ENCODE measurements at regions of chr1 and their contacts with region 1.

Region 1: DNA sequence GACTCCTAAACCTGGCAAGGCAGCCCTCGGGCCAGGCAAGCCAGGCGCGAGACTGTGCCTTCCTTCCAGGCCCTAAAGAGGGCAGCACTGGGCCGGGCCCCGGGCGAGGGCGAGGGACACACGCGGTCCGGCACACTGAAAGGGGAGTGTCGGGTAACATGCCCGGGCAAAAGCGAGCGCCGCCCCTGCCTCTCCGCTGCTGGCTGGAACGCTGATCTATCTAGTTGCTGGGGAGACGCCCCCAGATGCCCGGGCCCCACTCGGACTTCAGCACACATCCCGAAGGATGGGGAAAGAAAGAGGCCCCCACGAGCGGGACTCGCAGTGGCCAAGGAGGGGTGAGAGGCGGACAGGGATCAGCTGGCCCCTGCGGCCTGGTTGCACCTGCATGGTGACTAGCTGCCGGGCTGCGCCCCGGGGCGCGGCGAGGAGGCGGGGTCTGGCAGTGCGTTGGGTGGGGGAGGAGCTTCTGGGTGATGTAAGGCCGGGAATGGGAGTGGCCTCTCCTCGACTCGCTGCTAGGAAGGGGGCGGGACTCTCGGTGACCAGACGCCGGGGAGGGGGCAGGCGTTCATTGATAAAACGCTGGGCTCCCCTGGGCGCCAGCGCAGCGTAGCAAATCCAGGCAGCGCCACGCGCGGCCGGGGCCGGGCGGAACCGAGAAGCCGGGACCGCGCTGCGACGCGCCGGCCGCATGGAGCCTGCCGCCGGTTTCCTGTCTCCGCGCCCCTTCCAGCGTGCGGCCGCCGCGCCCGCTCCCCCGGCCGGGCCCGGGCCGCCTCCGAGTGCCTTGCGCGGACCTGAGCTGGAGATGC is at the start of gene PLK3:
- H3K4me3 Mint-ChIP-seq: peak within 1 kb of the TSS; percentile 96
- H3K27ac Mint-ChIP-seq: peak within 1 kb of the TSS; percentile 99
- H3K4me1 Mint-ChIP-seq: peaks cover 52% of the 10 kb centered on the region
- H3K27me3 Mint-ChIP-seq: no peaks in the 10 kb centered on the region

Region 2: GRCh38 chr1:44664730-44665370 is 135.1 kb before region 1 on chr1:
- intact Hi-C with region 1: no loop called
- H3K4me3 Mint-ChIP-seq: no peak overlapping the region
- H3K27ac Mint-ChIP-seq: no peak overlapping the region
- H3K4me1 Mint-ChIP-seq: peaks cover 12% of the 10 kb centered on the region
- H3K27me3 Mint-ChIP-seq: peaks cover 1% of the 10 kb centered on the region

Region 3: GRCh38 chr1:44819608-44820327 is 19.8 kb after region 1 on chr1:
- intact Hi-C with region 1: loop called (anchors 1 kb)
- H3K4me3 Mint-ChIP-seq: peak overlapping the region; percentile 93
- H3K27ac Mint-ChIP-seq: peak overlapping the region; percentile 98
- H3K4me1 Mint-ChIP-seq: peaks cover 48% of the 10 kb centered on the region
- H3K27me3 Mint-ChIP-seq: no peaks in the 10 kb centered on the region

Region 4: GRCh38 chr1:44830900-44831304 is 30.9 kb after region 1 on chr1:
- intact Hi-C with region 1: loop called (anchors 5 kb)
- H3K4me3 Mint-ChIP-seq: no peak overlapping the region
- H3K27ac Mint-ChIP-seq: peak overlapping the region; percentile 93
- H3K4me1 Mint-ChIP-seq: peaks cover 96% of the 10 kb centered on the region
- H3K27me3 Mint-ChIP-seq: peaks cover 1% of the 10 kb centered on the region

Region 5: DNA sequence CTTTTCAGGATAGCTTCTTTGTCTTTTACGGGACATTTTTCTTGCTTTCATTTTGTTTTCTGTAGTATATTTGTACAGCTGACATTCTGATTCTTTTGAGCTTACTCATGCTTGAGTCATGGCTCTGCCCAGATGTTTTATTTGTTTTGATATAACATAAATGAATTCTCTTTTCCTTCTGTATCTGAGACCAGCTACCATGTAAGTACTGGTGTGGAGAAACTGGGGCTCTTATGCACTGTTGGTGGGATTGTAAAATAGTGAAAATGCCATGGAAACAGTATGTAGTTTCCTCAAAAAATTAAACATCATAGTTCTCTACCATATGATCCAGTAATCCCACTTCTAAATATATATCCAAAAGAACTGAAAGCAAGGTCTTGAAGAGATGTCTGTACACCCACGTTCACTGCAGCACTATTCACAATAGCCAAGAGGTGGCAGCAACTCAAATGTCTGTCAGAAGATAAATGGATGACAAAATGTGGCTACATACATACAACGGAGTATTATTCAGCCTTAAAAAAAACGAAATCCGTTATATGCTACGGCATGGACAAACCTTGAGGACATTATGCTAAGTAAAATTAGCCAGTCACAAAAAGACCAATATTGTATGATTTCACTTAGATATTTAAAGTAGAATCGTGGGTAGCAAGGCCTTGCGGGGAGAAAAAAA is 125.0 kb after region 1 on chr1:
- intact Hi-C with region 1: no loop called
- H3K4me3 Mint-ChIP-seq: no peak overlapping the region
- H3K27ac Mint-ChIP-seq: no peak overlapping the region
- H3K4me1 Mint-ChIP-seq: no peaks in the 10 kb centered on the region
- H3K27me3 Mint-ChIP-seq: no peaks in the 10 kb centered on the region

Measured in dendritic cell treated with granulocyte-macrophage colony-stimulating factor and Interleukin-4, amounts not matched to agents 40 ng/mL and 50 ng/mL, for 4 days (primary cell).